Psoas muscle (tissue), 8 donors: ENCODE measurements at regions of chr22 and their contacts with region 1.

Region 1: GRCh38 chr22:37199103-37199759 is 11.2 kb upstream of the C1QTNF6 start:
- DNase-seq: peak; percentile 98 to 99
- ATAC-seq: peak; percentile 84 to 89 (median 87)
- H3K4me3 ChIP-seq: peak overlapping the region; percentile 86
- H3K27ac ChIP-seq: peak overlapping the region; percentile 98
- H3K4me1 ChIP-seq: peaks cover 27% of the 10 kb centered on the region
- H3K27me3 ChIP-seq: no peaks in the 10 kb centered on the region
- CTCF ChIP-seq: peak; percentile 94

Region 2: DNA sequence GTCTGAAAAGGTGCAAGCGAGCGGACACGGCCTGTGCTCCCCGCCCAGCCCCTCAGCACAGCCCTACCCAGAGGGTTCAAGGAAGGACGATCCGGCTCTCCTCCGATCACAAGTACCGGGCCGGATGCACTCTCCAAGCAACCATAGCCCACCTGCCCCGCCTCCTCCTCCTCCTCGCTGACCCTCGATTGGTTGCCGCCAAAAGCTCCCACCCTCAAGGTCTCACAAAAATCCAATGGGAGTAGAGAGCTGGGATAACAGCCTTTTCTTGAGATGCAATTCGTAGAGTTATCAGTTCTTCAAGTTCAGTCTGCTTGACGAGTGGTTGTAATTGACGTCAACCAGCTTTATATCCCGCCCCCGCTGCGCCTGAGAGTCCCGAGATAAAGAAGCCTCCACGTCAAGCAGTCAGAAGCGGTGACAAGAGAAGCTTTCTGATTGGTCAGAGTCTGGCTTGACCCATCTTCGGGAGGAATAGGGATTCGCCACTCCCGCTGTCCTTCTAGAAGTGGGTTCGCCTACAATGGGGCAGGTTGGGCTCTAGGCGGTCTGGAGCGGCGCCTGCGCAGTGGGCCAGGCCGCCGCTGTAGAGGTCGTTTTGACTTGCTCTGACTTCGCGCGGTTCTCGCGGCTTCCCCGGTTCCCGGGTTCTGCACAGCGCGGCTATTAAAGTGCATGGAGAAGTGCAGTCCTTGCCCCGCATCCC is 423.1 kb before region 1 on chr22 and contains the start of gene IFT27:
- intact Hi-C with region 1: loop called in 1 of 2 experiments (anchors 5 kb)
- DNase-seq: peak; percentile 97 to 98
- ATAC-seq: peak; percentile 97 to 98 (median 98)
- H3K4me3 ChIP-seq: peak within 1 kb of the TSS; percentile 87
- H3K27ac ChIP-seq: peak within 1 kb of the TSS; percentile 80
- H3K4me1 ChIP-seq: peaks cover 13% of the 10 kb centered on the region
- H3K27me3 ChIP-seq: no peaks in the 10 kb centered on the region
- CTCF ChIP-seq: no peak
- total RNA-seq, gene IFT27: 6.0 to 16.7 (median 8.5) TPM

Region 3: GRCh38 chr22:37077884-37078485 is 121.2 kb before region 1 on chr22:
- intact Hi-C with region 1: loop called (anchors 2 to 5 kb)
- DNase-seq: peak; percentile 52 to 68
- ATAC-seq: peak; percentile 55 to 67 (median 57)
- H3K4me3 ChIP-seq: no peak overlapping the region
- H3K27ac ChIP-seq: no peak overlapping the region
- H3K4me1 ChIP-seq: no peaks in the 10 kb centered on the region
- H3K27me3 ChIP-seq: peaks cover 0 to 33% (median 7%) of the 10 kb centered on the region in 3 donors
- CTCF ChIP-seq: peak; percentile 89

Region 4: DNA sequence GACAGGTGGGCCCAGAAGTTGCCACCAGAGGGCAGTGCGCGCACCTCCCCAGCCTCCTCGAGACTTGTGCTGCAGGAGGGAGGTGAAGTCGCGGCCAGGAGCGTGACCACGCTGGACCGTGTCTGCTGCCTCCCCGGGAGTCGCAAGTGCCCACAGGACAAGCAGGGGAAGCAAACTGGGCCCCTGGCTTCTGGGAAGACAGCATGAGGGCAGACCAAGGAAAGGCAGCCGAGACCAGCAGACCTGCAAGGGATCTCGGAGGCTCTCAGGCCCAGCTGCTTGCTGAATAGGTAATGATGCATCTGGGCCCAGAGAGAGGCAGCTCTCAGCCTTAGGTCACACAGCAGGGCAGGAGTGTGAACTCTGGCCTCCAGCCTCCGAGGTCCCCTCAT is 32.6 kb before region 1 on chr22:
- intact Hi-C with region 1: loop called (anchors 1 to 2 kb)
- DNase-seq: peak; percentile 87 to 94
- ATAC-seq: peak; percentile 92 to 99 (median 97)
- H3K4me3 ChIP-seq: peak overlapping the region; percentile 5
- H3K27ac ChIP-seq: peak overlapping the region; percentile 3
- H3K4me1 ChIP-seq: peaks cover 11% of the 10 kb centered on the region
- H3K27me3 ChIP-seq: peaks cover 0 to 3% (median 2%) of the 10 kb centered on the region in 3 donors
- CTCF ChIP-seq: peak; percentile 89